ENCODE measurements at regions of chr6 and their contacts with region 1.

Region 1: DNA sequence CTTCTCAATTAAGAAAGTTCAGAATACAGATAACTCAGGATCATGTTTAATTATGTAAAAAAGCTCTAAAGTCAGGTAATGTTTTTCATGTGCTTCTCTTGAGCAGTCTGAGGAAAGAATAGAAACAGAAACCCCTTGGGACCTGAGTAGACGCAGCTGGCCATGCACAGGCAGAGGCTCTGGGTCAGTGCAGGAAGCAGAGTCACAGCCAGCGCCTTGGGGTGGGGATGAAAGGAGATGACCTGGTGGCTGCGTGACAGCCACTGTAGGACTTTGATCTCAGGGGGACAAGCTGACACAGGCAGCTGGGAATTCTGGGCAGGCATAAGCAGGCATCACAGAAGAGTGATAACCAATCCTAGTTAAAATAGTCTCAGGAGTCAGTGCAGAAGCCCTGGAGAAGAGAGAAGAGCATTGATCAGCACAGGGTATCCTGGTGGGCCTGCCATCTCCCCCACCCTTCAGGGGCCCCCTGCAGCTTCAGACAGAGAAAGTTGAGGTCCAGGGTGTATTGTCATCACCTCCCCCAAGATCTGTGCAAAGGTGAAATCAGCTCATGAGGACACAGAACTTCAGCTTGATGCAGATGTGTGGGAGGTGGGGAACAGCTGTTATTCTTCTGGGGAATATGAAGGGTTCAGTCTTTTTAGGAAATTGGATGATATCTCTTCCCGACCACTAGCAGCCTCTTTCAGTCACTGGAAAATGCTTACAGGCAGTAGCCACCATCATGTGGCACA is 6.4 kb downstream of the HLA-DQB1 start:
- DNase-seq: peak; percentile 54
- ATAC-seq: peak; percentile 78
- H3K4me3 ChIP-seq: peak overlapping the region in 2 of 5 experiments; percentile 2 to 20
- H3K4me3 Mint-ChIP-seq: peak overlapping the region; percentile 89
- H3K27ac ChIP-seq: peak overlapping the region in 1 of 2 donors; percentile 57
- H3K27ac Mint-ChIP-seq: peak overlapping the region; percentile 100
- H3K4me1 ChIP-seq: peaks cover 34 to 49% of the 10 kb centered on the region in 2 donors
- H3K4me1 Mint-ChIP-seq: peaks cover 66% of the 10 kb centered on the region
- H3K27me3 ChIP-seq: no peaks in the 10 kb centered on the region
- H3K27me3 Mint-ChIP-seq: no peaks in the 10 kb centered on the region
- CTCF ChIP-seq: no peak

Region 2: DNA sequence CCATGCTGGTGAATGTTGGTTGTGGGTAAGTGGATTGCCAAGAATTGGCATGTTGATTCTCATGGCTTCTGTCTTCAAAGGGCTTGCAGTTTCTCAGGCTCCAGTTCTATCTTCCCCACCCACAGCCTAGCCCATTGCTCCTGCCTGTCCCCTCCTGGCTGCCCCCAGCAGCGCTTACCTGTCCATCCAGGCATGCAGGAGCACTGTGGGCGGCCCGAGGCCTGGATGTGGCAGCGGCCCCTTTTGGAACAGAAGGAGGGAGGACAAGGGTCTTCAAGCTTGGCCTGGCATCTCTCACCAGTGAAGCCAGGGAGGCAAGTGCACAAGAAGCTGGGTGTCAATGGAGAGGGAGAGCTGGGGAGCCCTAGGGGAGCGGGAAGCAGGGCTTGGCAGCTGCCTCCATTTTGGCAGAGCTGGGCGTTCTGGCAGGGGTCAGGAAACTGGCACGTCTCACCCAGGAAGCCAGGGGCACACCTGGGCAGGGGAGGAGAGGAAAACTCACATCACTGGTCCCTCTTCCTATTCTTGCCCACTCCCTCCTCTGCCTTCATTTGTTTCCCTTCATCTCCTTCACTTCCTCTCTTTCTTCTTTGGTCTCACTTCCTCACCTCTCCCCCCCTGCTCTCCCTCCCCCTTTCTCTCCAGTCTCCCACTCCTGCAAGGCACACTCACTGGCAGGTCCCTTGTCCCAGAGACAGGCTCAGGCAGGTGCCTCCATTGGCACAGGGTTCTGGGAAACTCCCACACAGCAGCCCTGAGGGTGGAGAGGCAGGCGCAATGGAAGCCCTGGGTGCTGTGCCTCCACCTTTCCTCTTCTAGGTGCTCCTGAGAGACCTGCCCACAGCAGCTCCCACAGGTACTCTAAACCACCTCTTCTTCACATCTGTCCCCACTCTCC is 437.4 kb before region 1 on chr6:
- CTCF ChIA-PET with region 1: no interaction called
- POLR2A ChIA-PET with region 1: no interaction called
- intact Hi-C with region 1: no loop called
- DNase-seq: peak; percentile 27
- ATAC-seq: no peak
- H3K4me3 ChIP-seq: no peak overlapping the region
- H3K4me3 Mint-ChIP-seq: peak overlapping the region; percentile 7
- H3K27ac ChIP-seq: peak overlapping the region; percentile 35 to 66
- H3K27ac Mint-ChIP-seq: peak overlapping the region; percentile 91
- H3K4me1 ChIP-seq: peaks cover 63 to 69% of the 10 kb centered on the region in 2 donors
- H3K4me1 Mint-ChIP-seq: peaks cover 57% of the 10 kb centered on the region
- H3K27me3 ChIP-seq: no peaks in the 10 kb centered on the region
- H3K27me3 Mint-ChIP-seq: peaks cover 2% of the 10 kb centered on the region
- CTCF ChIP-seq: no peak

Region 3: GRCh38 chr6:32642720-32643106 is 17.3 kb before region 1 on chr6:
- CTCF ChIA-PET with region 1: no interaction called
- POLR2A ChIA-PET with region 1: interaction called, 18 read pairs
- intact Hi-C with region 1: no loop called
- DNase-seq: peak; percentile 28
- ATAC-seq: no peak
- H3K4me3 ChIP-seq: peak overlapping the region in 1 of 5 experiments; percentile 9
- H3K4me3 Mint-ChIP-seq: peak overlapping the region; percentile 99
- H3K27ac ChIP-seq: peak overlapping the region in 1 of 2 donors; percentile 23
- H3K27ac Mint-ChIP-seq: peak overlapping the region; percentile 85
- H3K4me1 ChIP-seq: peaks cover 5 to 14% of the 10 kb centered on the region in 2 donors
- H3K4me1 Mint-ChIP-seq: peaks cover 62% of the 10 kb centered on the region
- H3K27me3 ChIP-seq: no peaks in the 10 kb centered on the region
- H3K27me3 Mint-ChIP-seq: no peaks in the 10 kb centered on the region
- CTCF ChIP-seq: no peak

Region 4: GRCh38 chr6:32692019-32692418 is 32.0 kb after region 1 on chr6:
- CTCF ChIA-PET with region 1: interaction called, 21 read pairs
- POLR2A ChIA-PET with region 1: interaction called, 123 read pairs
- intact Hi-C with region 1: no loop called
- DNase-seq: peak; percentile 85
- ATAC-seq: peak; percentile 60
- H3K4me3 ChIP-seq: no peak overlapping the region
- H3K4me3 Mint-ChIP-seq: peak overlapping the region; percentile 53
- H3K27ac ChIP-seq: peak overlapping the region; percentile 68 to 95
- H3K27ac Mint-ChIP-seq: peak overlapping the region; percentile 85
- H3K4me1 ChIP-seq: peaks cover 27 to 28% of the 10 kb centered on the region in 2 donors
- H3K4me1 Mint-ChIP-seq: peaks cover 33% of the 10 kb centered on the region
- H3K27me3 ChIP-seq: no peaks in the 10 kb centered on the region
- H3K27me3 Mint-ChIP-seq: no peaks in the 10 kb centered on the region
- CTCF ChIP-seq: peak; percentile 42

Region 5: GRCh38 chr6:32738126-32738525 is 78.1 kb after region 1 on chr6:
- CTCF ChIA-PET with region 1: no interaction called
- POLR2A ChIA-PET with region 1: no interaction called
- intact Hi-C with region 1: no loop called
- DNase-seq: no peak
- ATAC-seq: no peak
- H3K4me3 ChIP-seq: no peak overlapping the region
- H3K4me3 Mint-ChIP-seq: no peak overlapping the region
- H3K27ac ChIP-seq: no peak overlapping the region
- H3K27ac Mint-ChIP-seq: no peak overlapping the region
- H3K4me1 ChIP-seq: no peaks in the 10 kb centered on the region
- H3K4me1 Mint-ChIP-seq: no peaks in the 10 kb centered on the region
- H3K27me3 ChIP-seq: peaks cover 0 to 12% (median 1%) of the 10 kb centered on the region in 4 experiments
- H3K27me3 Mint-ChIP-seq: peaks cover 25% of the 10 kb centered on the region
- CTCF ChIP-seq: no peak

Region 6: DNA sequence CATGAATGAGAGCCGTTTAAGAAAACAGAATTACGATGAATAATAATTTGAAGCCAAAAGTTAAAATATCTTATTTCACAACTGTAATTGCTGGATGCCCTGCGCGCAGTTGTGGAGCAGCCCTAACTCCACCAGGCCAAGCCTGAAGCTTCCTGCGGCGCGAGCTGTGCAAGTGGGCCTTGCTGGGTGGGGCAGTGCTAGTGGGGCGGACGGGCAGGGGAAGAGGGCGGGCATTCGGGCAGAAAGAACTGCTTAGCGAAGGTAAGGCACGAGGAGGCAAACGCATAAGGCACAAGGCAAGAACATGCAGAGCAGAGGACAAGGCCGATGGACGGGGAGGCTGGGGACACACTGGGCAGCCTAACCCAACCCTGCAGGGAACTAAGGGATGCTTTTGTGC is 101.0 kb after region 1 on chr6:
- CTCF ChIA-PET with region 1: interaction called, 11 read pairs
- POLR2A ChIA-PET with region 1: interaction called, 63 read pairs
- intact Hi-C with region 1: no loop called
- DNase-seq: peak; percentile 46
- ATAC-seq: no peak
- H3K4me3 ChIP-seq: peak overlapping the region in 2 of 5 experiments; percentile 3
- H3K4me3 Mint-ChIP-seq: peak overlapping the region; percentile 78
- H3K27ac ChIP-seq: no peak overlapping the region
- H3K27ac Mint-ChIP-seq: peak overlapping the region; percentile 72
- H3K4me1 ChIP-seq: peaks cover 0 to 8% of the 10 kb centered on the region in 2 donors
- H3K4me1 Mint-ChIP-seq: peaks cover 6% of the 10 kb centered on the region
- H3K27me3 ChIP-seq: peaks cover 0 to 11% (median 2%) of the 10 kb centered on the region in 4 experiments
- H3K27me3 Mint-ChIP-seq: peaks cover 35% of the 10 kb centered on the region
- CTCF ChIP-seq: no peak

Region 7: GRCh38 chr6:33105916-33106871 is 446.2 kb after region 1 on chr6:
- CTCF ChIA-PET with region 1: no interaction called
- POLR2A ChIA-PET with region 1: no interaction called
- intact Hi-C with region 1: no loop called
- DNase-seq: no peak
- ATAC-seq: no peak
- H3K4me3 ChIP-seq: no peak overlapping the region
- H3K4me3 Mint-ChIP-seq: no peak overlapping the region
- H3K27ac ChIP-seq: no peak overlapping the region
- H3K27ac Mint-ChIP-seq: no peak overlapping the region
- H3K4me1 ChIP-seq: peaks cover 0 to 5% of the 10 kb centered on the region in 2 donors
- H3K4me1 Mint-ChIP-seq: peaks cover 6% of the 10 kb centered on the region
- H3K27me3 ChIP-seq: no peaks in the 10 kb centered on the region
- H3K27me3 Mint-ChIP-seq: peaks cover 10% of the 10 kb centered on the region
- CTCF ChIP-seq: no peak

Measured in B cell (primary cell).